ENCODE measurements at regions of chr5 and their contacts with region 1.

Region 1: GRCh38 chr5:58460732-58461286 is 923 bp upstream of the PLK2 start:
- DNase-seq: no peak
- H3K4me3 ChIP-seq: peak overlapping the region; percentile 96
- H3K27me3 ChIP-seq: no peaks in the 10 kb centered on the region
- CTCF ChIP-seq: peak; percentile 82

Region 2: GRCh38 chr5:57494104-57495098 is 966.4 kb before region 1 on chr5:
- CTCF ChIA-PET with region 1: interaction called, 28 read pairs
- POLR2A ChIA-PET with region 1: interaction called, 5 read pairs
- DNase-seq: peak; percentile 74
- H3K4me3 ChIP-seq: no peak overlapping the region
- H3K27me3 ChIP-seq: no peaks in the 10 kb centered on the region
- CTCF ChIP-seq: 0 out of 2 replicates have a peak, but pooled peaks have one; percentile 16

Region 3: GRCh38 chr5:57538341-57538955 is 922.4 kb before region 1 on chr5:
- CTCF ChIA-PET with region 1: no interaction called
- POLR2A ChIA-PET with region 1: interaction called, 16 read pairs
- DNase-seq: peak; percentile 77
- H3K4me3 ChIP-seq: no peak overlapping the region
- H3K27me3 ChIP-seq: no peaks in the 10 kb centered on the region
- CTCF ChIP-seq: no peak

Region 4: DNA sequence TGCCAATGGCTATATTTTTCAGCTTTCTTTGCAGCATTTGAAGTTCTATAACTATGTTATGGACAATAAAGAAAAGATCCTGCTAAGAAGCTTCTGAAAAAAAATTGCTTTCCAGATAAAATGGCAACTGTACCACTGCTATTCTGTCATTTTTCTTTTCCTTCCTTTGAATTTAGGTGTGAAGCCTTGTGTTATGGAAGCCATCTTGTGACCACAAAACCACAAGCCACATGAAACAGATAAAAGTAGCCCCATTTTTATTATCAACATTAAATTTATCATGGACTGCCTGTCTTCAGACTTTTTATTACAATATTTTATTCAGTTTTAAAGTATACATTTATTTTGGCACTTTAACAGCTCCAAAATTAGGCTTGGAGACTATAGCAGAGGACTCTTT is 688.3 kb before region 1 on chr5:
- CTCF ChIA-PET with region 1: interaction called, 120 read pairs
- POLR2A ChIA-PET with region 1: no interaction called
- DNase-seq: no peak
- H3K4me3 ChIP-seq: no peak overlapping the region
- H3K27me3 ChIP-seq: no peaks in the 10 kb centered on the region
- CTCF ChIP-seq: no peak

Region 5: DNA sequence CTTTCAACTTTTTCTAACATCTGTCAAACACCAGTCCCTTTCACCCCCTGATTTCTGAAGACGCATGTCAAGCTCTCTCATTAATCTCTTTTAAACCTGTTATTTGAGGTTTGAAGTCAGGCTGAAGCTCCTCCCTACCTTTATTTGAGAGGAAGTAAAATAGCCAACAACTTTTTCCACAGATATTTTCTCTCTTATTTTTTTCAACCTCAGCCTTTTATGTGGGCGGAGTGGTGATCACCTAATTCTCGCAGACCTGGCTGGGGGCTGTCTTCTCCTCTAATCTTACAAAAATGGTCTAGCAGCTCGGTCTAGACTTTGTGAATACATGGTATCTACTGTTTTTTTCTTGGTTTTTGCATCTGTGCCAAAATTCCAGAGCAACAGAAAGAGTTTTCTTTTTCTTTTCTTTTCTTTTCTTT is 582.5 kb before region 1 on chr5:
- CTCF ChIA-PET with region 1: interaction called, 10 read pairs
- POLR2A ChIA-PET with region 1: no interaction called
- DNase-seq: no peak
- H3K4me3 ChIP-seq: no peak overlapping the region
- H3K27me3 ChIP-seq: no peaks in the 10 kb centered on the region
- CTCF ChIP-seq: no peak

Region 6: GRCh38 chr5:57895766-57896165 is 565.0 kb before region 1 on chr5:
- CTCF ChIA-PET with region 1: interaction called, 11 read pairs
- POLR2A ChIA-PET with region 1: no interaction called
- DNase-seq: peak; percentile 39
- H3K4me3 ChIP-seq: no peak overlapping the region
- H3K27me3 ChIP-seq: no peaks in the 10 kb centered on the region
- CTCF ChIP-seq: no peak

Measured in BJ (cell line).